ENCODE measurements at regions of chr3 and their contacts with region 1.

Region 1: DNA sequence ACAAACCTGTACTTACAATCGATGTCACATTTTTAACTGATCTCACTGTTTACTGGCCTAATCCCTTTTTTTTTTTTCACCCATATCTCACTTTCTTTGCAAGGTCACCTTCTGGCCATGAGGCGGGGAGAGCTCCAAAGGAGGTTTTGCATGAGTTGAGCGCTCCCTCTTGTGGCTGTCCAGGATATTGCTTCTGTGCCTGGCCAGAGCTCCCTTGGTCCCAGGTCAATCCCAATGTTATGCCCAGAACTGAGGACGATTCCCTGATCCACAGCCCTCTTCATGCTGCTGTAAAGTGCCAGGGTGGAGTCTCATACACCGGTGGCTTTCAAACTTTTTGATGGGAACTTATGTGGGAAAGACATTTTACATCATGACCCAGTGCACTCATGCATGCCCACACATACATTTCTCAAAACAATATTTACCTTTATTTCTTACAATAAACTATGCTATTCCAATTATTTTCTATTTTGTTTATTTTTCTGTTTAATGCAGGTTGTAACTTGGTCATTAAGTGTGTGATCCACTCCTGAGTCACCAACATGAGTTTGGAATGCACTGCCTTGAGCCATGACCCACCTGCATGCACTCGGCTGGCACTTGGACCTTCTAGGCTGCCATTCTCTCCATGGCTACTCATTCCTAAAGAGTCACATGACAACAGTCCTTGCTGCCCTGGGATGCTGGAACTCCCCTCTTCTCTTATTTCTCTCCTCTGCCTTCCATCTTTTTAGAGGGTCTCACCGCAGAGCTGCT is 9.6 kb upstream of the SST start:
- ATAC-seq: peak; percentile 75 to 93 (median 84)
- H3K4me3 ChIP-seq: no peak overlapping the region
- H3K27ac ChIP-seq: no peak overlapping the region
- H3K4me1 ChIP-seq: peaks cover 0 to 3% of the 10 kb centered on the region in 2 donors

Region 2: GRCh38 chr3:186871403-186871924 is 808.4 kb before region 1 on chr3:
- in situ Hi-C with region 1: loop called in 1 of 9 experiments (anchors 25 kb)
- ATAC-seq: no peak
- H3K4me3 ChIP-seq: no peak overlapping the region
- H3K27ac ChIP-seq: no peak overlapping the region
- H3K4me1 ChIP-seq: no peaks in the 10 kb centered on the region

Region 3: DNA sequence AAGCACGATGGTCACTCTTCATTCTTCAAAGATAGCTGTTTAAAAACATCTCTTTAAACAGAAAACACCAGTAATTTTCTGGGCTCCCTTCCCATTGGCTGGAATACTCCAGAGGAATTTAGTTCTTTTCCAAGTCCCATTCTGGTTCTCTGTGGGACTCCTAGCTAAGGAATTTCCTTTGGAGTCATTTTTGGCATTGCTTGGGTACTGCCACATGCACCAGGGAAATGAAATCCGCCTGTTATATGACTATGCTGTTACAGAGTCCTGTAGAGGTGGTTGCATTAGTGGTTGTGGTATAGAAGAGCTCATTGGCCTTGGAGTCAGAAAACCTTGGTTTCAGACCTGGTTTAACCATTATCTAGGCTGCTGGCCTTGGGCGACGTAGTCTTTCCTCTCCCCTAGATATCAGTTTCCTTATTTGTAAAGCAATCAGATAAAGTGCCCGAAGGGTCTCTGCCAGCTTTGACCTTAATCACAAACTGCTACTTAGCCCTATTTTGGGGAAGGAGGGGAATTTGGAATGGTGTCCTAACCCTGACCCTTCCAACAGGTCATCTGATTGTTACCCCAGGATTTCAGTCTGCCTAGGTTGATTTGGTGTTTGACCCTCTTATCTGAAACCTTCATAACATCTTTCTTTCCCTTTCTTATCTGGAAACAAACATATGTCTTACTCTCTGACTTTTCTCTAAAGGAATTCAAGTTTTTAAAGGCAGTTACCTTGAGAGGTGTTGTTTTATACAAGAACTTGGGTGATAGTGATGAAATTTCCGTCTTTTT is 469.1 kb before region 1 on chr3:
- in situ Hi-C with region 1: loop called in 6 of 9 experiments (anchors 10 to 25 kb)
- ATAC-seq: no peak
- H3K4me3 ChIP-seq: no peak overlapping the region
- H3K27ac ChIP-seq: no peak overlapping the region
- H3K4me1 ChIP-seq: no peaks in the 10 kb centered on the region

Region 4: DNA sequence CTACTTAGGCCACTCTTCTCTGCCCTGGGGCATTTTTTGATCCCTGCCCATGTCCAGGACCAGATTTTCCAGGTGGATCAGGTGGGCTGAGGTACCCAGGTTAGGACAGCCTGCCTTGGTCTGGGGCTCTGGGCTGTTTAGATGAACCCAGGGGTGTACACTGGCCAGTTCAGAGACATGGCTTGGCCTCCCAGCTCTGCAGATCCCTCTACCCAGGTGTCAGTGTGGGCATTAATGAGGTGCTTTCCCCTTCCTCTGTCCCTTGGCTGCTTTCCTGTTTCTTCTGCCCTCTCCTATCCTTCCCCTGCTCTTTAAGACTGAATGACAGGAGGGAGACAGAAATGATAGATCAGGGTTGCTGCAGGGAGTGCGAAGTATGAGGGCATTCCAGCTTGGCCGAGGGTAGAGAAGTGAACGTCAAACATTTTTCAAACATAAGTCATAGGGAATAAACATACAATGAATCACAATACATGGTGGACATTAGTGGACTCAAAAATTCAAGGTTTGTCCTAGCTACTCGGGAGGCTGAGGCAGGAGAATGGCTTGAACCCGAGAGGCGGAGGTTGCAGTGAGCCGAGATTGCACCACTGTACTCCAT is 452.1 kb before region 1 on chr3:
- in situ Hi-C with region 1: loop called in 7 of 9 experiments (anchors 10 to 25 kb)
- ATAC-seq: no peak
- H3K4me3 ChIP-seq: no peak overlapping the region
- H3K27ac ChIP-seq: no peak overlapping the region
- H3K4me1 ChIP-seq: no peaks in the 10 kb centered on the region

Region 5: DNA sequence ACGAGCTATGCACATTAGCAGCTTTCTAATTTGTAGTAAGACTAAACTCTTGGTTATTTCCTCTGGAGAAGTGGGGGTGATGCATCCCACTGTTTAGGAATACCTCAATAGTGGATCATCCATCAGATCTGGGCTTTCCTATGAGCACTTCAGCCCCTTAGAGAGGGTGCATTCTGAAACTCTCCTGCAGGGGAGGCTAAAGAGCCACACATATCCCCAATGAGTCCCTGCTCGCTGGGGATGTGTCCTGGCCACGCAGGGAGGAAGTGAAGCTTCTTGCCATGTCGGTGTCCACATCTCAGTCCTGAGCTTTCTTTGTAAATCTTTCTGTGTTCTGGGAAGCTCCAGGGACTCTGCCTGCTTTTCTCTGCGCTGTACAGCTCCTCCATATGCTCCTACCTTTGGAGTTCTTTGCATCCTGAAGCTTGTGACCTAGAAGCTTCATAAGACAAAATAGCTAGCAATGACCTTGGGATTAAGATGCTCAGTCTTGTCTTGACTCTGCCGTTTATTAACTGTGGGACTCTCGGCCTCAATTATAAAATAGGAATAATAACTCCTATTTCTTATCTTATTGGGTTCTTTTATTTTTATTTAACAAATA is 360.0 kb before region 1 on chr3:
- in situ Hi-C with region 1: loop called (anchors 5 to 25 kb)
- ATAC-seq: peak; percentile 64 to 95 (median 84)
- H3K4me3 ChIP-seq: no peak overlapping the region
- H3K27ac ChIP-seq: no peak overlapping the region
- H3K4me1 ChIP-seq: peaks cover 0 to 5% of the 10 kb centered on the region in 2 donors

Region 6: DNA sequence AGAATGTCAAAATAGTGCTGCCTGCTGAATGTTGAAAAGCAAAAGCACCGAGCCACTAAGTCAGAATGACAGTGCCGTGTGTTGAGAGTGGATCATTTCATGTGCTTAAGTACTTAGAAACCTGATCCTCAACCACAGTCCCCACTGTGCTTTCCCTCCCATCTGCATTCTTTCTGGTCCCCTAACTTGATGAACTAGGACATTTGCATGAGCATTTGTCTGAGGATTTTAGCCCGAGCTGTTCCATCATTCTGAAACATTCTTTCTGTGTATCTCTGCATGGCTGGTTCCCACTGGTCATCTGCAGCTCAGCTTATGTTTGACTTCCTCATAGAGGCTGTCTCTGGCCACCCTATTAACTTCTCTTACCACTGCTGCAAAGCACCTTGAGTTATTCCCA is 51.6 kb before region 1 on chr3:
- in situ Hi-C with region 1: loop called in 1 of 9 experiments (anchors 10 kb)
- ATAC-seq: peak in 1 of 8 experiments; percentile 17
- H3K4me3 ChIP-seq: no peak overlapping the region
- H3K27ac ChIP-seq: no peak overlapping the region
- H3K4me1 ChIP-seq: peaks cover 0 to 3% of the 10 kb centered on the region in 2 donors

Measured in motor neuron (in vitro differentiated cells).